ENCODE measurements at regions of chr21 and their contacts with region 1.

Region 1: DNA sequence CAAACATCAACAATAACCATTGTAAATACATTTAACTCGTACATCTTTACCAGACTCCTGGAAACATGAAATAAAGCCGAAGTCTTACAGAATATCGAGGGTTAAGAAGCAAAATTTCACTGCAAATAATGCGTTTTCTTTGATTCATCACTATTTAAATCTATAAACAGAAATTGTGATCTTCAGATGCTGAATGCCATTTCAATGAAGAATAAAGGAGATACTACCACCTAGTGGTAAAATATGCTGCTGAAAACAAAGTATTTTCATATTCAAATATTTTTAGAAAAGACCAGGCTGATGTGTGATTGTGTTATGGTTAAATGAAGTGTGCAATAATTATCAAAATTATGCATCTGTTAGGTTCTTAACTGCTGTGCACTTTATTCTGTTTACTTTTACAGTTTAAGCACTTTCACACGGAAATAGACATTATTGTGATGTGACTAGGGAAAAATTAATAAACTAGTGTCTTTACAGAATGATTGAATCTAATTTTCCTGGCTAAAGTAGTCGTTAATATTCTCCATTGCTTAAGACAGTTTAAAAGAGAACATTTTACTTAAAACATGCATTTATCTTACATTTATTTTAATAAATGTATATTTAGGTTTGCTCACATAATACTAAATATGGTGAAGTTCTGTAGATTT is 1093.1 kb downstream of the MRPL39 start:
- DNase-seq: no peak
- ATAC-seq: no peak
- H3K4me3 ChIP-seq: no peak overlapping the region
- H3K27ac ChIP-seq: no peak overlapping the region
- H3K4me1 ChIP-seq: no peaks in the 10 kb centered on the region
- H3K27me3 ChIP-seq: no peaks in the 10 kb centered on the region
- CTCF ChIP-seq: peak; percentile 21 to 50 (median 41); a peak in 4 of 6 replicates
- EP300 ChIP-seq: no peak
- POLR2A ChIP-seq: no peak
- RAD21 ChIP-seq: 0 out of 2 replicates have a peak, but pooled peaks have one; percentile 4

Region 2: GRCh38 chr21:24316277-24316922 is 197.8 kb before region 1 on chr21:
- CTCF ChIA-PET with region 1: no interaction called
- POLR2A ChIA-PET with region 1: no interaction called
- RAD21 ChIA-PET with region 1: no interaction called
- SMC1A ChIA-PET with region 1: no interaction called
- in situ Hi-C with region 1: no loop called
- intact Hi-C with region 1: no loop called
- DNase-seq: no peak
- ATAC-seq: no peak
- H3K4me3 ChIP-seq: no peak overlapping the region
- H3K27ac ChIP-seq: no peak overlapping the region
- H3K4me1 ChIP-seq: no peaks in the 10 kb centered on the region
- H3K27me3 ChIP-seq: no peaks in the 10 kb centered on the region
- CTCF ChIP-seq: no peak
- EP300 ChIP-seq: no peak
- POLR2A ChIP-seq: no peak
- RAD21 ChIP-seq: no peak

Region 3: DNA sequence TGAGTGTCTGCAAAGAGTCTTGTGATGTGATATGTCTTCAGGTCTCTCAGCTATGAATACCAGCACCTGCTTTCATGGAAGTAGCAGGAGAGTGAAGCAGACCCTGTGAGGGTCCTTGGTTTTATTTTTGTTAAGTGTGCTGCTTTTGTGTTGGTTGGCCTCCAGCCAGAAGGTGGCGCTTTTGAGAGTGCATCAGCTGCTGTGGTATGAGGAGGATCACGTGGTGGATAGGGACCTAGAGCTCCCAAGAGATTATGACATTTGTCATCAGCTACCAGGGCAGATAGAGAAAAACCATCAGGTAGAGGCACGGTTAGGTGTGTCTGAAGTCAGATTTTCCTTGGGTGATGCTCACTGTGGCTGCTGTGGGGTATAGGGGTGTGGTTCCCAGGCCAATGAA is 139.0 kb before region 1 on chr21:
- CTCF ChIA-PET with region 1: no interaction called
- POLR2A ChIA-PET with region 1: no interaction called
- RAD21 ChIA-PET with region 1: no interaction called
- SMC1A ChIA-PET with region 1: no interaction called
- in situ Hi-C with region 1: no loop called
- intact Hi-C with region 1: loop called (anchors 10 kb)
- DNase-seq: no peak
- ATAC-seq: peak; percentile 39
- H3K4me3 ChIP-seq: no peak overlapping the region
- H3K27ac ChIP-seq: no peak overlapping the region
- H3K4me1 ChIP-seq: no peaks in the 10 kb centered on the region
- H3K27me3 ChIP-seq: no peaks in the 10 kb centered on the region
- CTCF ChIP-seq: peak in 1 of 3 experiments; percentile 20; a peak in 1 of 6 replicates
- EP300 ChIP-seq: no peak
- POLR2A ChIP-seq: no peak
- RAD21 ChIP-seq: no peak

Region 4: GRCh38 chr21:24545807-24546361 is 31.7 kb after region 1 on chr21:
- CTCF ChIA-PET with region 1: no interaction called
- POLR2A ChIA-PET with region 1: no interaction called
- RAD21 ChIA-PET with region 1: no interaction called
- SMC1A ChIA-PET with region 1: no interaction called
- in situ Hi-C with region 1: no loop called
- intact Hi-C with region 1: no loop called
- DNase-seq: no peak
- ATAC-seq: no peak
- H3K4me3 ChIP-seq: no peak overlapping the region
- H3K27ac ChIP-seq: no peak overlapping the region
- H3K4me1 ChIP-seq: no peaks in the 10 kb centered on the region
- H3K27me3 ChIP-seq: no peaks in the 10 kb centered on the region
- CTCF ChIP-seq: no peak
- EP300 ChIP-seq: no peak
- POLR2A ChIP-seq: no peak
- RAD21 ChIP-seq: no peak

Region 5: DNA sequence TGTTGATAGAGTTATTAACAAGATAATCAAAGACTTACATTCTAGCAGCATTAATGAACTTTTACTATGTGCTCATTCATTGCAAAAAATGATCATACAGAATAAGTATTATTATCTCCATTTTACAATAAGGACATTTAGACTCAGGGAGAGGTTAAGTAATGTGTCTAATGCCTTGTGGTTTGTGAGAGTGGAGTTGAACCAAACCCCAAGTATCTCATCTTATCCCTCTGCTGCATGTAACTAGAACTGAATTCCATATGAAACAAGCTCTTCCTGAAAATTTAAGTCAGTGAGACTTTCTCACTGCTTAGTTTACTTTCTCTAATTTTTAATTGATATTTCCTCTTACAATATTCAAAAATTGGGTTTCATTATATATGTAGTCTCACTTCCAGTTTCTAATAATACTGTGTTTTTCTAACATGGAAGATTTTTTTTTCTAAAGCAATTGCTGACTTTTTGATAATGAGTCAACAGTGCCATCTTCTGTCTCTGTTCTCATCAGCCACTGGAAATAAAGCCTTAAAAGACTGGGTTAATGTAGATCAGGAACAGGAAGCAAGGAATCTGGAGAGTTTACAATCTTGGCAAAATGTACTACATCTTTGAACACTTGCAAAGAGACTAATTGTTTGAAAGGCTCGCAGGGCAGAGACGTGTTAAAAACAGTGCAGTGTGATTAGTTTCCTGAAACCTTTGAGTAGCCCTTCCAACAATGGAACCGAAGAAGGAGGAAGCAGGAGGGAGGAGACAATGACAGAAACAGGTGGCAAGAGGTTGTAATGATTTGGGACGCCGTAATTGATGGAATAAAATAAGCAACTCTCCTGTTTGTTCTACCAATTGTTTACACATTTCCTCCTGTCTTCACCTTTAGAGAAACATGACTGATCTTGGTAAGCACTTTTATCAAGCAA is 525.5 kb after region 1 on chr21:
- CTCF ChIA-PET with region 1: interaction called, 3 read pairs
- POLR2A ChIA-PET with region 1: no interaction called
- RAD21 ChIA-PET with region 1: no interaction called
- SMC1A ChIA-PET with region 1: no interaction called
- in situ Hi-C with region 1: no loop called
- intact Hi-C with region 1: loop called (anchors 10 kb)
- DNase-seq: peak; percentile 82
- ATAC-seq: peak; percentile 89
- H3K4me3 ChIP-seq: peak overlapping the region; percentile 20; the same call in 1 of the 2 replicates
- H3K27ac ChIP-seq: 0 out of 2 replicates have a peak overlapping the region, but pooled peaks have one; percentile 4
- H3K4me1 ChIP-seq: 0 out of 2 replicates have a peak, but pooled peaks cover 2% of the 10 kb centered on the region
- H3K27me3 ChIP-seq: no peaks in the 10 kb centered on the region
- CTCF ChIP-seq: peak; percentile 36 to 67 (median 66)
- EP300 ChIP-seq: 0 out of 4 replicates have a peak, but pooled peaks of 1 of the 2 experiments have one; percentile 40
- POLR2A ChIP-seq: no peak
- RAD21 ChIP-seq: peak; percentile 71